ENCODE measurements at regions of chr1 and their contacts with region 1.

Region 1: GRCh38 chr1:93324486-93325464 is 20.9 kb upstream of the DR1 start:
- DNase-seq: peak in 1 of 2 experiments; percentile 96
- H3K4me3 ChIP-seq: peak overlapping the region; percentile 14; the same call in 1 of the 2 replicates
- H3K27ac ChIP-seq: peak overlapping the region; percentile 63
- H3K4me1 ChIP-seq: peaks cover 48% of the 10 kb centered on the region
- H3K27me3 ChIP-seq: no peaks in the 10 kb centered on the region
- CTCF ChIP-seq: no peak

Region 2: GRCh38 chr1:93338421-93338820 is 13.6 kb after region 1 on chr1:
- CTCF ChIA-PET with region 1: interaction called, 11 read pairs
- POLR2A ChIA-PET with region 1: interaction called, 7 read pairs
- intact Hi-C with region 1: loop called (anchors 1 kb)
- DNase-seq: peak; percentile 58 to 96
- H3K4me3 ChIP-seq: peak overlapping the region; percentile 16; the same call in 1 of the 2 replicates
- H3K27ac ChIP-seq: peak overlapping the region; percentile 83
- H3K4me1 ChIP-seq: peaks cover 42% of the 10 kb centered on the region
- H3K27me3 ChIP-seq: no peaks in the 10 kb centered on the region
- CTCF ChIP-seq: no peak

Region 3: GRCh38 chr1:93345633-93346420 is 21.1 kb after region 1 on chr1 and contains the start of gene DR1:
- CTCF ChIA-PET with region 1: no interaction called
- POLR2A ChIA-PET with region 1: interaction called, 4 read pairs
- intact Hi-C with region 1: loop called (anchors 1 kb)
- DNase-seq: peak; percentile 84 to 94
- H3K4me3 ChIP-seq: peak within 1 kb of the TSS; percentile 86
- H3K27ac ChIP-seq: peak within 1 kb of the TSS; percentile 86
- H3K4me1 ChIP-seq: peaks cover 35% of the 10 kb centered on the region
- H3K27me3 ChIP-seq: no peaks in the 10 kb centered on the region
- CTCF ChIP-seq: no peak
- total RNA-seq, gene DR1: 33.6 and 37.8 TPM in 2 replicates

Region 4: DNA sequence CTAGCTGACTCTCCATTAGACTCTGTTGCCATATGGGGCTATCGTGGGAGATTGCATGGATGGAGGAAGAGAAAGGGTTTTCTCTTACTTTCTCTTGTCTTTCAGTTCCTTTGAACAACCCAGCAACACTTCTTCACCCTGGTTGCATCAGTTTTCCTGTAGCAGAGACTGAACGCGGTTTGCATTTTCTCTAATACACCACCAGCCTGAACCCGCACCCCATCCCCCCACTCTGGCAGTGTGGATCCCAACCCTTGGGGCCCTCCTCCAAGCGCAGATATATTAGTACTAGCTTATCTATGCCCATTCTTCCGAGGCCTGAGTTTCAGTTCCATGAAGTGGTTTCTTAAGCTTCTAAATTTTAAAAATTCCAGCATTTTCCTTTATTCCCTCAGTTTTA is 33.5 kb after region 1 on chr1:
- CTCF ChIA-PET with region 1: no interaction called
- POLR2A ChIA-PET with region 1: no interaction called
- intact Hi-C with region 1: no loop called
- DNase-seq: no peak
- H3K4me3 ChIP-seq: no peak overlapping the region
- H3K27ac ChIP-seq: no peak overlapping the region
- H3K4me1 ChIP-seq: no peaks in the 10 kb centered on the region
- H3K27me3 ChIP-seq: no peaks in the 10 kb centered on the region
- CTCF ChIP-seq: no peak